Cardiac septum (tissue), 1 donor: ENCODE measurements at regions of chr10 and their contacts with region 1.

Region 1: DNA sequence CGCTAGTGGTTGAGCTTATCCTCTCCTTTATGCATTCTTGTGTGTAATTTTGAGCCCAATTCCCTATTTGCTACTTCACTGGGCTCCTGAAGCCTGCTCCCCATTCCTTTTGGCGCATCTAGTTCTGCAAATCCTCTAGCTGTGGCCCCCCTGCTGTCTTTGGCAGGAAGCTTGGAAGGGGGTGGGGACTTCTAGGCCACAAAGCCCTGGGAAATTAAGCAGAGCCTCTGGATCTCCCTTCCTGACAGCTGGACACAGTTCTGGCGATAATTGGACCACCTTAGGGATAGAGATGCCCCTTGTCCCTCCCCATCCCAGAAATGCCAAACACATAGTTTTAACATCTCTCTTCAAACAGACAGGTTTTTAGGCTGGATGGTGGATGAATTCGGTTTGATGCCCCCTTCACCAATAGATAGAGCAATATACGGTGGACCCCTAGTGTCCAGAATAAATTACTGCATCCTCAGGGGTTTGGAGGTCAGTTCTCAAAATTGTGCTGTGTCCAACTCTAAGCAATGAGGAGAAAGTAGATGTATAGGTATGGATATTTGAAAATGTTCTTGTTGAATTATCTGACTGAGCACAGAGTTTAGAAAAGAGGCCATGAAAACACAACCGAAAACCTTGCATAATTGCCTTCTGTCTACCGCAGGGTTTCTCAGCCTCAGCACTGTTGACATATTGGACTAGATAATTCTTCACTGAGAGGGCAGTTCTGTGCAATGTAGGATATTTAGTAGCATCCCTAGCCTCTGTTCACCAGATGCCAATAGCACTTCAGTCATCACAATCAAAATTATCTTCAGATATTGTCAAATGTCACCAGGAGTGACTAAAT is 75.5 kb downstream of the PAPSS2 start:
- DNase-seq: no peak

Region 2: GRCh38 chr10:87538092-87539015 is 196.9 kb before region 1 on chr10:
- intact Hi-C with region 1: loop called (anchors 5 kb)
- DNase-seq: no peak